ENCODE measurements at regions of chr19 and their contacts with region 1.

Region 1: GRCh38 chr19:12379749-12380737 is 14.6 kb upstream of the ZNF442 start:
- DNase-seq: no peak
- ATAC-seq: no peak
- H3K4me3 ChIP-seq: no peak overlapping the region
- H3K27ac ChIP-seq: no peak overlapping the region
- H3K4me1 ChIP-seq: no peaks in the 10 kb centered on the region
- H3K27me3 ChIP-seq: no peaks in the 10 kb centered on the region
- CTCF ChIP-seq: no peak
- EP300 ChIP-seq: no peak
- POLR2A ChIP-seq: no peak
- RAD21 ChIP-seq: no peak

Region 2: GRCh38 chr19:12400633-12401502 is 20.8 kb after region 1 on chr19 and contains the start of gene ZNF799:
- CTCF ChIA-PET with region 1: no interaction called
- POLR2A ChIA-PET with region 1: no interaction called
- in situ Hi-C with region 1: no loop called
- intact Hi-C with region 1: no loop called
- DNase-seq: peak; percentile 78 to 97 (median 81)
- ATAC-seq: peak; percentile 98
- H3K4me3 ChIP-seq: peak within 1 kb of the TSS; percentile 71
- H3K27ac ChIP-seq: peak within 1 kb of the TSS; percentile 70
- H3K4me1 ChIP-seq: peaks cover 4 to 12% of the 10 kb centered on the region in 2 experiments; a peak in 2 of 5 replicates
- H3K27me3 ChIP-seq: no peaks in the 10 kb centered on the region
- CTCF ChIP-seq: peak in 1 of 3 experiments; percentile 25; a peak in 3 of 6 replicates
- EP300 ChIP-seq: no peak
- POLR2A ChIP-seq: peak; percentile 74
- RAD21 ChIP-seq: 0 out of 4 replicates have a peak, but pooled peaks of 1 of the 2 experiments have one; percentile 17
- polyA plus RNA-seq, gene ZNF799: 0.63 to 2.2 TPM

Region 3: DNA sequence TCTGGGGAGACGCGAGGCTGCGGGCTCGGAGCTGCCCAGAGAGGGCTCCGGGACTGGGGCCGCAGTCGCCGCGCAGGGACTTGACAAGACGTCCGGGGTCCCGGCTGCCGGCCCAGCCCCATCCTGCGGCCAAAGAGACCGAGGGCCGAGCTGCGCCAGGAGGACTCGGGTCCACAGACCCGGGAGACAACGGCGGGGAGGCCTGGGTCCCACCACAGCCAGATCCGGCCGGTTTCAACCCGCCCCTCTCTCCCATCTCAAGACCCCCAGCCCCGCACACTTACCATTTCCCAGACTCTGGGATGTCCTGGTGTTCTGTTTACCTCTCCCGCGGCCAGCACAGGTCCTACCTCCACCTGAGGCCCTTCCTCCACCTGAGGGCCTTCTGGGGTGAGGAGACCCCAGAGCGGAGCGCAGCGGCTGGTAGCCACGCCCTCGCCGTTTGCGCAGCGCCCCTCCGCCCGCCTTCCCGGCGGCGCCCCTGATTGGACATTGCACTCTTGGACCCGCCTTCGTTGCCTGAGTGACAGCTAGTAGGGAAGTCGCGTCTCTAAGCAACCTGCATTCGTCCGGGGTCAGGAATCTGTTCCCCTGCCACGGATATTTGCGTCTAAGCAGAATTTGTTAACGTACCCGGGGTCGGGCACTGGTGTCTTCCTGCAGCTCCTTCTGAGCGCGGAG is 104.5 kb after region 1 on chr19 and contains the start of gene ZNF709:
- CTCF ChIA-PET with region 1: no interaction called
- POLR2A ChIA-PET with region 1: no interaction called
- in situ Hi-C with region 1: no loop called
- intact Hi-C with region 1: loop called (anchors 10 kb)
- DNase-seq: peak; percentile 82 to 93 (median 90)
- ATAC-seq: peak; percentile 98
- H3K4me3 ChIP-seq: peak within 1 kb of the TSS; percentile 58
- H3K27ac ChIP-seq: no peak within 1 kb of the TSS
- H3K4me1 ChIP-seq: peaks cover 0 to 11% of the 10 kb centered on the region in 2 experiments; a peak in 3 of 5 replicates
- H3K27me3 ChIP-seq: no peaks in the 10 kb centered on the region; a peak in 1 of 5 replicates
- CTCF ChIP-seq: no peak
- EP300 ChIP-seq: no peak
- POLR2A ChIP-seq: no peak
- RAD21 ChIP-seq: no peak
- polyA plus RNA-seq, gene ZNF709: 0.13 to 0.15 TPM

Region 4: GRCh38 chr19:12527034-12527836 is 147.2 kb after region 1 on chr19:
- CTCF ChIA-PET with region 1: no interaction called
- POLR2A ChIA-PET with region 1: no interaction called
- in situ Hi-C with region 1: no loop called
- intact Hi-C with region 1: no loop called
- DNase-seq: peak in 1 of 4 experiments; percentile 37
- ATAC-seq: no peak
- H3K4me3 ChIP-seq: no peak overlapping the region
- H3K27ac ChIP-seq: no peak overlapping the region
- H3K4me1 ChIP-seq: no peaks in the 10 kb centered on the region
- H3K27me3 ChIP-seq: no peaks in the 10 kb centered on the region
- CTCF ChIP-seq: no peak
- EP300 ChIP-seq: no peak
- POLR2A ChIP-seq: no peak
- RAD21 ChIP-seq: no peak

Measured in K562 (cell line).